ENCODE measurements at regions of chr11 and their contacts with region 1.

Region 1: GRCh38 chr11:85742873-85743275 is 56.9 kb upstream of the CCDC89 start:
- DNase-seq: no peak
- ATAC-seq: peak; percentile 14
- H3K4me3 ChIP-seq: no peak overlapping the region
- H3K4me3 Mint-ChIP-seq: peak overlapping the region in 2 of 10 donors; percentile 24 to 39
- H3K27ac ChIP-seq: no peak overlapping the region
- H3K27ac Mint-ChIP-seq: peak overlapping the region in 8 of 9 donors; percentile 16 to 82 (median 41)
- H3K4me1 ChIP-seq: peaks cover 24 to 43% of the 10 kb centered on the region in 2 donors
- H3K4me1 Mint-ChIP-seq: peaks cover 27 to 92% (median 64%) of the 10 kb centered on the region in 7 donors
- H3K27me3 ChIP-seq: no peaks in the 10 kb centered on the region
- H3K27me3 Mint-ChIP-seq: no peaks in the 10 kb centered on the region

Region 2: DNA sequence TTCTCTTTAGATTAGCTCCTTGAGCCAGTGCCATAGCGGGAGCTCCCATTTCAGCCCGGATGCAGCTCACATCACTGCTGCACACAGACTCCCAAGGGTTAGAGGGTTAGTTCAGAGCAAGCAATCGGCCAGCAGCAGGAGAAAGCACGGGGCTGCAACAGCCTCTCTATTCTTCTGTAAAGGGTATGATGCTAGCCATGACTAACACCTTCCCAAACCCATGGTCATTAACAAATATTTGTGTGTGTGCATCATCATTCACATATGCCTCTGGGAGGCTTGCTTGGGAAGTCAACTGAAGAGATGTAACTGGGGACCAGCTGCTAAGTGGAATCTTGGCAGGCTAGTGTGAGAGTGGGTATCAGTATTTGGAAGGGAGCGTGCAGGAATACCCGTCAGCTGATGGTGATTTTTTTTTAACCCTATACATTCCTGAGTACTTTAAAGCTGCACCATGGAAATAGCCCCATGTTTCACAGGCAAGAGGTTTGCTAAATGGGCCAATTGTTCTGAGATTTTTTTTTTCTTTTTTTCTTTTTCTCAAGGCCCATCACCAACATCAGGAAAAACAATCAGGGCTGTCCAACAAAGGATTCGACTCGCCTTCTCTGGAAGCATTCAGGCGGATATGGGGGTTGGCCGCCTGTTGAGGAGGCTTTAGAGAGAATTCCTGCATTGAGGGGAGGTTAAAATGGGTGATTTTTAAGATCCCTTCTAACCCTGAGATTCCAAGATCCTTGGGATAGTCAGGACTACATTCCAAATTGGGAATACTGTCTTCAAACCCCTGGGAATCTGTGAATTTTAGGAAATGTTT is 23.7 kb before region 1 on chr11:
- CTCF ChIA-PET with region 1: interaction called, 3 read pairs
- POLR2A ChIA-PET with region 1: no interaction called
- intact Hi-C with region 1: loop called in 1 of 2 experiments (anchors 2 kb)
- DNase-seq: no peak
- ATAC-seq: no peak
- H3K4me3 ChIP-seq: no peak overlapping the region
- H3K4me3 Mint-ChIP-seq: no peak overlapping the region
- H3K27ac ChIP-seq: no peak overlapping the region
- H3K27ac Mint-ChIP-seq: peak overlapping the region in 1 of 9 donors; percentile 84
- H3K4me1 ChIP-seq: no peaks in the 10 kb centered on the region
- H3K4me1 Mint-ChIP-seq: peaks cover 0 to 4% (median 0%) of the 10 kb centered on the region in 7 donors
- H3K27me3 ChIP-seq: no peaks in the 10 kb centered on the region
- H3K27me3 Mint-ChIP-seq: peaks cover 0 to 2% (median 0%) of the 10 kb centered on the region in 5 donors

Measured in naive thymus-derived CD4-positive, alpha-beta T cell (primary cell).